Esophagus muscularis mucosa (tissue), 4 donors: ENCODE measurements at regions of chr16 and their contacts with region 1.

Region 1: DNA sequence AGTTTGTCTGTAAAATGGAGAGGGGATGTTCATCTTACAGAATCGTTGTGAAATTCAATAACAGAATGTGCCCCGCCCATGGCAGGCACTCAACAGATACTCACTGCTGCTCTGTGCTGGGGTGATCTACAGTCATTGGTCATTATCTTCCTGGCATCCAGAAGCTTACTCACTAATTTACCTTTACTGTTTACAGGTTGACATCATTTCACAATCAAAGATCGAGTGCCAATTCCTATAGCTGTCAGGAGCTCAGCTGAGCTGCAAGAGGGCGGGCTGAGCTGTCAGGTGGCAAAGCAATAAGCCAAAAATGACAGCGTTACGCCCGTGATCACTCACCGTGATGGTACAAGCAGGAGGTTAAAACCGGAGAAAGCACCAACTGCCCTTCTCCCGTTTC is 51.2 kb downstream of the LITAF start:
- DNase-seq: no peak
- H3K4me3 ChIP-seq: no peak overlapping the region
- H3K27ac ChIP-seq: no peak overlapping the region
- H3K4me1 ChIP-seq: peaks cover 0 to 10% (median 3%) of the 10 kb centered on the region in 4 donors
- H3K27me3 ChIP-seq: peaks cover 0 to 2% (median 0%) of the 10 kb centered on the region in 4 donors
- CTCF ChIP-seq: no peak
- EP300 ChIP-seq: no peak
- POLR2A ChIP-seq: no peak

Region 2: DNA sequence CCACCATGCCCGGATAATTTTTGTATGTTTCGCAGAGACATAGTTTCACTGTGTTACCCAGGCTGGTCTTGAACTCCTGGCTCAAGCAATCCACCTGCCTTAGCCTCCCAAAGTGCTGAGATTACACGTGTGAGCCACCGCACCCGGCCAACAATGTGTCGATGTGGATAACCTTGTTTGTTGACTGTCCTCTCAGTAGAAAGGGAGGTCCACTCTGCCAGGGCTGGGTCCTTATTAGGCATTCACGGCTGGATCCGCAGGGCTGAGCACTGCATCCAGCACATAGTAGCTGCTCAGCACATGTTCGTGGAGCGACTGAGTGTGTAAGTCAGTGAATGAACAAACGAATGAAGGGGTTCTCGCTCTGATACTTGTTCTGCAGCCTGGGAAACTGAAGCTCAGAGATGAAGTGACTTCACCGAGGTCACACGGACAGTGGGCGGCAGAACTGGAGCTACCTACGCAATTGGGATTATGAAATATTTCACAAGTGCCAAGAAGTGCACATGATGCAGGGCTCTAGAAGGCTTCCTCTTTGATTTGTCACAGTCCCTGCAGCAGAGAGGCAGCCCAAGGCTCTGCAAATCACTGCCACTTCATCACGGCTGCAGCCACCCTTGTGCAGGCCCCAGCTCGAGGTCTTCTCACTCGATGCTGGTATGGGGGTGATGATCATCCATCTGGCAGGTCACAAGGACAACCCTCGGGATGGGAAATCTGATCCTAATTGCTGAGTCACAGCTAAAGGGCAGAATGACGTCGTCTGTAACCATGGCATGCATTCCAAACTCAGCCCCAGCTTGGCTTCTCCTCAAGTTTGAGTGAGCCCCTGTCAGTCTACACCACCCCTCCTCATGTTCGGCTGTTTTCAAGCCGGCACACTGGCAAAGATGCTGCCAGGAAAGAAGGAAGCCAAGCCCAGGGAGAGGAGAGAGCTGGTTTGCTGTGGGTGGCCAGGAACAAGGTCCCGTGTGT is 104.7 kb after region 1 on chr16:
- intact Hi-C with region 1: loop called (anchors 2 kb)
- DNase-seq: no peak
- H3K4me3 ChIP-seq: peak overlapping the region in 2 of 4 donors; percentile 3 to 16
- H3K27ac ChIP-seq: peak overlapping the region; percentile 76 to 85 (median 80)
- H3K4me1 ChIP-seq: peaks cover 16 to 24% (median 23%) of the 10 kb centered on the region in 4 donors
- H3K27me3 ChIP-seq: no peaks in the 10 kb centered on the region
- CTCF ChIP-seq: no peak
- EP300 ChIP-seq: peak; percentile 74
- POLR2A ChIP-seq: peak; percentile 4

Region 3: DNA sequence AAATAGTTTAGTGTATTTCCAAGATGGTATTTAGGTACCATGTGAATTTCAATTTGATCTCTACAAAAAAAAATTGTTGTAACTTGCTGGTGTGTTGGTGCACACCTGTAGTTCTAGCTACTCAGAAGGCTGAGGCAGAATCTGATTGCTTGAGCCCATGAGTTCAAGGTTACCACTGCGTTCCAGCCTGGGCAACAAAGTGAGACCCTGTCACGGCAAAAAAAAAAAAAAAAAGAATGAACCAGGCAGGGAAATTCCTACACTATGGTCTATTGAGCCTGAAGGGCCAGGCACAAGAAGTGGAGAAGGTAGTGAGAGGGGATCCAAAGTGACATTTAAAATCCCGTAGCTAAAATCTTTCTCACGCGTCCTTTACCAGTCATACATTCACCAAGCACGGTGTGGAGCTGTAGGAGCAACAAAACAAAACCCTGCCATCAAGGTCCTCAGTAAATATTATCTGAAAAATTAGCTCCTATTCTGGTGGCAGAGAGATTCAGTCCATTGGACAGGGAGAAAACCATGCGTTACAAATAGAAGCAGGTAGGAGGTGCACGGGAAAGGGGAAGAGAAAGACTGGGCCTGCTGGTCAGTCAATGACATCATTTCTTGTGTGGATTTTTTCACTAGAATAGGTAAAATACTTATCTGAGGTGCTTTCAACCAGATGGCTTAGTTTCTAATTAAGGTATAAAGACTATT is 179.9 kb after region 1 on chr16:
- intact Hi-C with region 1: loop called (anchors 5 kb)
- DNase-seq: no peak
- H3K4me3 ChIP-seq: no peak overlapping the region
- H3K27ac ChIP-seq: no peak overlapping the region
- H3K4me1 ChIP-seq: peaks cover 9 to 41% (median 32%) of the 10 kb centered on the region in 4 donors
- H3K27me3 ChIP-seq: no peaks in the 10 kb centered on the region
- CTCF ChIP-seq: no peak
- EP300 ChIP-seq: no peak
- POLR2A ChIP-seq: no peak

Region 4: GRCh38 chr16:11819798-11820197 is 284.3 kb after region 1 on chr16:
- intact Hi-C with region 1: loop called (anchors 10 kb)
- DNase-seq: no peak
- H3K4me3 ChIP-seq: no peak overlapping the region
- H3K27ac ChIP-seq: no peak overlapping the region
- H3K4me1 ChIP-seq: peaks cover 6 to 9% (median 8%) of the 10 kb centered on the region in 4 donors
- H3K27me3 ChIP-seq: no peaks in the 10 kb centered on the region
- CTCF ChIP-seq: no peak
- EP300 ChIP-seq: no peak
- POLR2A ChIP-seq: no peak